H1 (cell line): ENCODE measurements at regions of chr7 and their contacts with region 1.

Region 1: DNA sequence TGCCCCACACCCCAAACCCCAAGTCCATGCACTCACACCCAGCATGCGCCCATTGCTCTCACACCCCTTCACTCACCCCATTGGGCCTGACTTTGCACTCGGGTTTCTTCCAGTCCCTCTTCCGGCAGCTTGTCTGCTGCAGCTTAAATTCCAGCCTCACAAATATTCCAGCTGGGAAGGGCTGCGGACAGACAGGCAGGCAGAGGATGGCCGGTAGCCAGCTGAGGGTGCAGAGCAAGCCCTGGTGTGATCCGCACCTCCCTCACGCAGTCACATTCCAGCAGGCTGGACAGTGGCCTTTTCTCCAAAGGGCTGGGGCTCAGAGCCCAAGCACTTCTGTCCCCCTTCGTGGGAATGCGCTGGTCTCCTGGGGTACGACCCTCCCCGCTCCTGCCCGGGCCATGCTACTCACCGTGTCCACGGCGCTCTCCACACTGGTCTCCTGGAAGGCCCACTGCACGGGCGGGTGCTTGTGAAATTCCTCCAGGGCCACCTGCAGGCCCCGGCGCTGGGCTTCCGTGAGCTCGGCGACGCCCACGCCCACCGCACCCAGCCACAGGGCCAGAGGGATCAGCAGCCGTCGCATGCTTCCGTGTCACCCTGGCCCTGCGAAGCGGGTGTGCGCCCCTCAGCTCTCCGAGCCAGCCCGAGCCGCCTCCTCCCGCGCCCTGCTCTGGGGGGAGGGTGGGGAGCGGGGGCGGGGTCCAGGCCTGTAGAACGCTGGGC is 1.2 kb downstream of the RARRES2 start:
- DNase-seq: no peak
- H3K4me3 ChIP-seq: peak overlapping the region; percentile 84 to 94 (median 85)
- H3K27ac ChIP-seq: no peak overlapping the region
- H3K4me1 ChIP-seq: peaks cover 15 to 65% (median 38%) of the 10 kb centered on the region in 4 experiments
- H3K27me3 ChIP-seq: peaks cover 0 to 26% (median 20%) of the 10 kb centered on the region in 4 experiments; a peak in 6 of 7 replicates
- CTCF ChIP-seq: no peak
- EP300 ChIP-seq: no peak
- POLR2A ChIP-seq: no peak
- RAD21 ChIP-seq: no peak

Region 2: DNA sequence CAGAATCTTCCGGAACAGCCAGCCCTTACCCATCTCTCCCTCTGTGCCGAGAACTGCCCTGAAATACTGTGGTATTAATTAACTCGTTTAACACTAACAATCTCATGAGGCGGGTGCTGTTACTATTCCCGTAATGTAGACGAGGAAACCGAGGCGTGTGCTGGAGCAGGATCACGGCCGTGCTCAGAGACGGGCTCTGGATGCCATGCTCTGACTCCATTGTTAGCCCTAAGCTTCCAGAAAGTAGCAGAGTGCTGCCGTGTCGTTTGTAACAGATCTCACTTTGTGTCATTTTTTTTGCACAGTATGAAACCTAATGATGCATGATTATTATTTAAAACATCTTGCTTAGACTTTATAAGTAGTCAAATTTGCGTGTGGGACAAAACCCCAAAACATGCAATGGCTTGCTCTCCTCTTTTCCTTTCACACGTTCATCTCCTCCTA is 16.5 kb before region 1 on chr7:
- CTCF ChIA-PET with region 1: interaction called, 8 read pairs
- POLR2A ChIA-PET with region 1: interaction called, 22 read pairs
- DNase-seq: no peak
- H3K4me3 ChIP-seq: peak overlapping the region; percentile 55 to 61 (median 56)
- H3K27ac ChIP-seq: no peak overlapping the region
- H3K4me1 ChIP-seq: peaks cover 8 to 14% (median 13%) of the 10 kb centered on the region in 4 experiments
- H3K27me3 ChIP-seq: peaks cover 0 to 2% (median 0%) of the 10 kb centered on the region in 4 experiments; a peak in 3 of 7 replicates
- CTCF ChIP-seq: no peak
- EP300 ChIP-seq: no peak
- POLR2A ChIP-seq: no peak
- RAD21 ChIP-seq: no peak

Region 3: GRCh38 chr7:150329331-150330120 is 10.7 kb before region 1 on chr7:
- CTCF ChIA-PET with region 1: interaction called, 8 read pairs
- POLR2A ChIA-PET with region 1: interaction called, 22 read pairs
- DNase-seq: peak in 1 of 2 experiments; percentile 66
- H3K4me3 ChIP-seq: no peak overlapping the region; a peak in 2 of 8 replicates
- H3K27ac ChIP-seq: peak overlapping the region; percentile 43; the same call in 1 of the 2 replicates
- H3K4me1 ChIP-seq: peaks cover 10 to 31% (median 23%) of the 10 kb centered on the region in 4 experiments
- H3K27me3 ChIP-seq: 0 out of 7 replicates have a peak, but pooled peaks cover 0 to 2% (median 0%) of the 10 kb centered on the region in 4 experiments
- CTCF ChIP-seq: peak in 2 of 3 experiments; percentile 5 to 18; a peak in 1 of 4 replicates
- EP300 ChIP-seq: no peak; a peak in 1 of 3 replicates
- POLR2A ChIP-seq: peak in 1 of 2 experiments; percentile 36; a peak in 1 of 3 replicates
- RAD21 ChIP-seq: peak; percentile 13 to 38; a peak in 2 of 4 replicates

Region 4: GRCh38 chr7:150466477-150466876 is 126.3 kb after region 1 on chr7:
- CTCF ChIA-PET with region 1: no interaction called
- POLR2A ChIA-PET with region 1: no interaction called
- DNase-seq: no peak
- H3K4me3 ChIP-seq: no peak overlapping the region
- H3K27ac ChIP-seq: no peak overlapping the region
- H3K4me1 ChIP-seq: no peaks in the 10 kb centered on the region
- H3K27me3 ChIP-seq: peaks cover 0 to 2% (median 0%) of the 10 kb centered on the region in 4 experiments; a peak in 1 of 7 replicates
- CTCF ChIP-seq: no peak
- EP300 ChIP-seq: no peak
- POLR2A ChIP-seq: no peak
- RAD21 ChIP-seq: no peak